ENCODE measurements at regions of chr1 and their contacts with region 1.

Region 1: GRCh38 chr1:24847995-24848881 is 81.8 kb downstream of the RUNX3 start:
- DNase-seq: peak; percentile 84 to 95 (median 88)
- ATAC-seq: peak; percentile 97
- H3K4me3 ChIP-seq: peak overlapping the region; percentile 42
- H3K27ac ChIP-seq: peak overlapping the region; percentile 51; the same call in 2 of the 3 replicates
- H3K4me1 ChIP-seq: peaks cover 0 to 13% of the 10 kb centered on the region in 2 experiments; a peak in 2 of 5 replicates
- H3K27me3 ChIP-seq: peaks cover 7 to 11% of the 10 kb centered on the region in 2 experiments; a peak in 4 of 5 replicates
- CTCF ChIP-seq: peak; percentile 97 to 98 (median 98)
- EP300 ChIP-seq: peak; percentile 68
- POLR2A ChIP-seq: peak; percentile 76
- RAD21 ChIP-seq: peak; percentile 95 to 96

Region 2: GRCh38 chr1:24541711-24542346 is 306.4 kb before region 1 on chr1:
- CTCF ChIA-PET with region 1: no interaction called
- POLR2A ChIA-PET with region 1: no interaction called
- in situ Hi-C with region 1: no loop called
- intact Hi-C with region 1: no loop called
- DNase-seq: peak in 2 of 4 experiments; percentile 40 to 51
- ATAC-seq: peak; percentile 81
- H3K4me3 ChIP-seq: no peak overlapping the region
- H3K27ac ChIP-seq: no peak overlapping the region
- H3K4me1 ChIP-seq: peaks cover 1 to 3% of the 10 kb centered on the region in 2 experiments; a peak in 2 of 5 replicates
- H3K27me3 ChIP-seq: peaks cover 10 to 24% of the 10 kb centered on the region in 2 experiments; a peak in 4 of 5 replicates
- CTCF ChIP-seq: peak; percentile 74 to 82 (median 79)
- EP300 ChIP-seq: no peak
- POLR2A ChIP-seq: no peak
- RAD21 ChIP-seq: peak; percentile 51 to 80

Region 3: GRCh38 chr1:24897767-24898483 is 49.7 kb after region 1 on chr1:
- CTCF ChIA-PET with region 1: interaction called, 12 read pairs
- POLR2A ChIA-PET with region 1: no interaction called
- in situ Hi-C with region 1: no loop called
- intact Hi-C with region 1: loop called (anchors 2 kb)
- DNase-seq: peak; percentile 57 to 82 (median 81)
- ATAC-seq: peak; percentile 95
- H3K4me3 ChIP-seq: no peak overlapping the region
- H3K27ac ChIP-seq: no peak overlapping the region
- H3K4me1 ChIP-seq: peaks cover 0 to 11% of the 10 kb centered on the region in 2 experiments; a peak in 1 of 5 replicates
- H3K27me3 ChIP-seq: peaks cover 32 to 75% of the 10 kb centered on the region in 2 experiments; a peak in 4 of 5 replicates
- CTCF ChIP-seq: peak; percentile 87 to 93 (median 89)
- EP300 ChIP-seq: no peak
- POLR2A ChIP-seq: no peak
- RAD21 ChIP-seq: peak; percentile 67 to 81

Region 4: GRCh38 chr1:24909388-24909898 is 61.2 kb after region 1 on chr1:
- CTCF ChIA-PET with region 1: no interaction called
- POLR2A ChIA-PET with region 1: no interaction called
- in situ Hi-C with region 1: loop called (anchors 5 kb)
- intact Hi-C with region 1: loop called (anchors 2 kb)
- DNase-seq: peak; percentile 73 to 78 (median 75)
- ATAC-seq: peak; percentile 84
- H3K4me3 ChIP-seq: no peak overlapping the region
- H3K27ac ChIP-seq: no peak overlapping the region
- H3K4me1 ChIP-seq: peaks cover 6 to 29% of the 10 kb centered on the region in 2 experiments
- H3K27me3 ChIP-seq: peaks cover 0 to 20% of the 10 kb centered on the region in 2 experiments; a peak in 3 of 5 replicates
- CTCF ChIP-seq: peak; percentile 74 to 84 (median 81)
- EP300 ChIP-seq: no peak
- POLR2A ChIP-seq: no peak
- RAD21 ChIP-seq: peak in 1 of 2 experiments; percentile 43; a peak in 2 of 4 replicates

Region 5: DNA sequence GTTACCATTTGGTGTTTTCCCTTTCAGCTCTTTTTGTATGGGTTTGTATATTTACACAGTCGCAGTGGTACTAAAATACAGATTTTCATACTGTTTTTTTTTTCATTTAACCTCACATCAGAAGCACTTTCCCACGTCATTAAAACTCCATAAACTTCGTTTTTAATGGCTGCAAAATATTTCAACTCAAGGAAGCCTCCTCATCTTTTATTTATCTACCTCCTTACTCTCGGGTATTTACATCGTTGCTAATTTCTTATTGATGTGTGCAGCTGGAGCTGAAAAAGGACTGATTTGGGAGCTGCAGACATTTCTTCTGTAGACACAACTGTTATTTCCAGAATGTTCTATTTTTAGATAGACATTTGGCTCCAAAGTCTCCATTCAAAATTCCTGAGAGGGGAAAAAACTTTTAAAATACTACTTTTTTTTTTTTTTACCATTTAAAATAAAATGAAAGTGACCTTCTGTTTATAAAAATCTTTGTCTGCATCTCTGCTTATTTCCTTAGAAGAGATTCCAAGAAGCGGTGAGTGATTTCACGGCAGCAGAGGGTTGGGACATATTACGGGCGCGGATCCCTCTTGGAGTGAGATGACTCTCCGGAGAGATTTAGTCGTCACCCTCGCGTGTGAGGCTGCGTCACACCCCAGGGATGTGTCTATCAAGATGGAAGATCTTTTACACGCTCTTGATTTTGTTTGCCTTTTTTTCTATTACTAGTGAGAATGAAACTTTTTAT is 71.7 kb after region 1 on chr1:
- CTCF ChIA-PET with region 1: no interaction called
- POLR2A ChIA-PET with region 1: no interaction called
- in situ Hi-C with region 1: no loop called
- intact Hi-C with region 1: loop called (anchors 5 kb)
- DNase-seq: peak in 3 of 4 experiments; percentile 24 to 43 (median 41)
- ATAC-seq: no peak
- H3K4me3 ChIP-seq: no peak overlapping the region
- H3K27ac ChIP-seq: no peak overlapping the region
- H3K4me1 ChIP-seq: peaks cover 0 to 10% of the 10 kb centered on the region in 2 experiments; a peak in 1 of 5 replicates
- H3K27me3 ChIP-seq: peaks cover 49 to 73% of the 10 kb centered on the region in 2 experiments
- CTCF ChIP-seq: no peak
- EP300 ChIP-seq: no peak
- POLR2A ChIP-seq: no peak
- RAD21 ChIP-seq: no peak

Region 6: DNA sequence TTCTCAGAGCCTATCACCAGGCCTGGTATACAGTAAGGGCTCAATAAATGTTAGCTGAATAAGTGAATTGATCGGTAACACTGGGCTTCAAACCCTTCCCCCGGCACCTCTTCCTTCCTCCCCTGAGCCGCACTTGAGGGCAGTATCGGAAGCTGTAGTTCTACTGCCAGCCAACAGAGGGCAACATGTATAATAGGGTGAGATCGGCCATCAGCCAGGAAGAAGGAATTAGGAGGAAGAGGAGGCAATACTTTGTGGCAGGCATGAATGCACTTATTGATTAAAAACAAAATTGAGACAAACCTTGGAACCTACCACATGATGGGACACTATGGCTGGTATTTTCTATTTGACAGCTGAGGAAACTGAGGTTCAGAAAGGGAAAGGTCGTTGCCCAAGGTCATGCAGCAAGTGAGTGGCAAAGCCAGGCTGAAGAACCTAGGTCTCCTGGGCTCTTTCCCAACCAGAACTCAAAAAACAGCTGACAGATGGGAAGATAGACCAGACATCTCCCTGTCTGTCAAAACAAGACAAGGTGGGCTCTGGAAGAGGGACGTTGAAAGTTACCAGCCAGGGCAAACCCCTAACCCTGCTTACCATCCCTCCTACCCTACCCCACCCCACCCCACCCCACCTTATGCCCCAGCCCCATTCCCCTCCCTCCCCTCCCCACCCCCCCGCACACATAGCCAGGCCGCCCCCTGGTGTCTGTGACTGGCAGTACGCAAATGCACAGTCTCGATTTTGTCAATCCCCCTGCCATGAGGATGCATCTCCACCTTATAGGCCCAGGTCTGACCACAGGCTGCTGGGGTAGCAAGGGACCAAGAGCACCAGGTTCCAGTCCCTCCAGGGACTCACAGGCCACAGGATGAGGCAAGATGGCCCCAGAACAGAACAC is 189.2 kb after region 1 on chr1:
- CTCF ChIA-PET with region 1: interaction called, 11 read pairs
- POLR2A ChIA-PET with region 1: no interaction called
- in situ Hi-C with region 1: no loop called
- intact Hi-C with region 1: loop called (anchors 1 kb)
- DNase-seq: peak; percentile 66 to 82 (median 80)
- ATAC-seq: peak; percentile 85
- H3K4me3 ChIP-seq: no peak overlapping the region
- H3K27ac ChIP-seq: no peak overlapping the region
- H3K4me1 ChIP-seq: peaks cover 0 to 7% of the 10 kb centered on the region in 2 experiments; a peak in 2 of 5 replicates
- H3K27me3 ChIP-seq: peaks cover 3 to 58% of the 10 kb centered on the region in 2 experiments; a peak in 4 of 5 replicates
- CTCF ChIP-seq: peak; percentile 86 to 92 (median 87)
- EP300 ChIP-seq: no peak
- POLR2A ChIP-seq: no peak
- RAD21 ChIP-seq: peak; percentile 51 to 76

Region 7: DNA sequence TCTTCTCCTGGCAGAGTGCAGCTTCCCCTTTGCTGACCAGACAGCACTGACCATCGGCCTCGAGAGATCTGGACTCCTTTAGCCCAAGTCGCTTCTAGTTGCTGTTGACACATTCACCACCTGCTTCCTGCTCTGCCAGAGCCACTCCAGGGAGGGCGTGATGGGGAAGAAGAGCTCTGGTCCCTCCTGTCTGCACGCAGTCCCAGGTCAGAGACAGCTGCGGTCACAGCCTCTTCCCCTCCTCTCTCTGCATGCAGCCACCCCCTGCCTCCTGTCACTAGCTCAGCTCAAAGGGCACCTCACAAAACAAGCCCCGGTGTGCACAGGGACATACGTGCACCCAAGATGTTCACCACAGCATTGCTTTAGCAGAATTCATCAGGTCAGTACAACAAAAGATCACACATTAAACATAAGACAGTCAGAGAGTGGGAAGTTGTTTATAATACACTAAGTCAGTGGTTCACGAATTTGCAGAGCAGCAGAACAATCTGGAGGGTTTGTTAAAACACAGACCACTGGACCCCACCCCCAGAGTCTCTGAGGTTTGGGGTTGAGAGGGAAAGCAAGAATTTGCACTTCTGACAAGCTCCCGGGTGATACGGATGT is 251.2 kb after region 1 on chr1:
- CTCF ChIA-PET with region 1: interaction called, 9 read pairs
- POLR2A ChIA-PET with region 1: no interaction called
- in situ Hi-C with region 1: loop called (anchors 5 kb)
- intact Hi-C with region 1: loop called (anchors 1 kb)
- DNase-seq: no peak
- ATAC-seq: no peak
- H3K4me3 ChIP-seq: no peak overlapping the region
- H3K27ac ChIP-seq: no peak overlapping the region
- H3K4me1 ChIP-seq: peaks cover 0 to 5% of the 10 kb centered on the region in 2 experiments; a peak in 1 of 5 replicates
- H3K27me3 ChIP-seq: peaks cover 0 to 26% of the 10 kb centered on the region in 2 experiments; a peak in 3 of 5 replicates
- CTCF ChIP-seq: no peak
- EP300 ChIP-seq: no peak
- POLR2A ChIP-seq: no peak
- RAD21 ChIP-seq: no peak

Region 8: DNA sequence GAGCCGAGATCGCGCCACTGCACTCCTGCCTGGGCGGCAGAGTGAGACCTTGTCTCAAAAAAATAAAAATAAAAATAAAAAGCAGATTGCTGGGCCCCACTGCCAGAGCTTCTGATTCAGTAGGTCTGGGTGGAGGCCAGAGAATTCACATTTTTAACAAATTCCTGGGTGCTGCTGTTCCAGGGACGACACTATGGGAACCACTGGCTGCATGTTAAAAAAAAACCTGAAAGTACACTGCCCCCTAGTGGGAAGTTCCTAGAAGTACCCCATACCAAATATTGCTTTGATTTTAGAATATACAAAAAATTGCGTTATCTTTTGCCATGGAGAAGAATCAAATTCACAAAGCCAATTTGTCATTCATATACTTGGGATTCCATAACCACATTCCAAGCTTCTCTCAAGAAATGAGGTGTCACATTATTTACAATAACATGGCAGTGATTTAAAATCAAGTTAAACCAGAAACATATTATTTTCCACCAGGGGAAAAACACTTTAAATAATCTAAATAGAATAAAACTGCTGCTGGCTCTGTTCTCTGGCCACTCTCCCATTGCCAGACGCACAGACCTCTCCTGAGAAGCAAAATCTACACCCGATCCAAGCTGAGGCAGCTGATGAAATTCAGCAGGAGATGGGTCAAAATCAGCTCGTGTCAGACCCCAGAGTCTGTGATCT is 356.7 kb after region 1 on chr1:
- CTCF ChIA-PET with region 1: interaction called, 5 read pairs
- POLR2A ChIA-PET with region 1: no interaction called
- in situ Hi-C with region 1: no loop called
- intact Hi-C with region 1: loop called (anchors 2 kb)
- DNase-seq: peak; percentile 65 to 77 (median 74)
- ATAC-seq: peak; percentile 84
- H3K4me3 ChIP-seq: no peak overlapping the region
- H3K27ac ChIP-seq: no peak overlapping the region
- H3K4me1 ChIP-seq: no peaks in the 10 kb centered on the region
- H3K27me3 ChIP-seq: peaks cover 21 to 25% of the 10 kb centered on the region in 2 experiments; a peak in 4 of 5 replicates
- CTCF ChIP-seq: peak; percentile 64 to 88 (median 79)
- EP300 ChIP-seq: no peak
- POLR2A ChIP-seq: no peak
- RAD21 ChIP-seq: peak; percentile 43 to 71; a peak in 3 of 4 replicates

Region 9: GRCh38 chr1:26468911-26469310 is 1620.7 kb after region 1 on chr1:
- CTCF ChIA-PET with region 1: no interaction called
- POLR2A ChIA-PET with region 1: no interaction called
- in situ Hi-C with region 1: no loop called
- intact Hi-C with region 1: no loop called
- DNase-seq: no peak
- ATAC-seq: no peak
- H3K4me3 ChIP-seq: no peak overlapping the region
- H3K27ac ChIP-seq: no peak overlapping the region
- H3K4me1 ChIP-seq: peaks cover 20 to 26% of the 10 kb centered on the region in 2 experiments; a peak in 4 of 5 replicates
- H3K27me3 ChIP-seq: no peaks in the 10 kb centered on the region
- CTCF ChIP-seq: no peak
- EP300 ChIP-seq: no peak
- POLR2A ChIP-seq: no peak
- RAD21 ChIP-seq: no peak

Measured in K562 (cell line).